Lower leg skin (tissue), 4 donors: ENCODE measurements at regions of chr1 and their contacts with region 1.

Region 1: DNA sequence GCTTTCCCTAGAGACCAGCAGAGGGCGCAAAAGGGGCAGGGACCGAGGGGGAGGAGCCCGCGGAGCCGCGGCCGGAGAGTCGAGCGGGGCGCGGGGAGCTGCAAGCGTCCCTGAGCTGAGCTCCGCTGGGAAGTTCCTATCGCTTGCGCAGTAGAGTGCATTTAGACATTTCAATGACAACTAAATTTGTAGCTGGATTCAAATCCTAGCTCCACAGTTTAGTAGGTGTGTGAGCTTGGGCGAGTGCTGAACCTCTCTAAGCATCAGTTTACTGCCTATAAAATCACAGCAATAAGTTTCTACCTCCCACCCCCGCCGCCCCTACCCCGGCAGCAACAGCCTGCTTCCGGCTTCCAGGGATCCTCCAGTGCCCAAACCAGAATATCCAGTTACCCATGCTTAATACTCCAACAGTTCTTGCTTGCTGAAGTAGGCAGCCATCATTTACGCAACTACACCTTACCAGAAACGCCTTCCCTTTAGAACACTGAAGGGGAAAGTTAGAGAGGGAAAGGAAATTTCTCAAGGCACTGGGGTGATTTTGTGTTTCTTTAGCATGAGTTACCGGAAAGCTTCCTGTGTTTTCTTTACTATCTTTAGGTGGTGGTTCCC is 9.1 kb downstream of the TLR5 start:
- DNase-seq: peak; percentile 83 to 97
- H3K4me3 ChIP-seq: no peak overlapping the region
- CTCF ChIP-seq: no peak
- POLR2A ChIP-seq: no peak

Region 2: GRCh38 chr1:223363856-223364684 is 230.1 kb after region 1 on chr1 and contains the start of gene SUSD4:
- intact Hi-C with region 1: loop called (anchors 10 kb)
- DNase-seq: no peak
- H3K4me3 ChIP-seq: peak within 1 kb of the TSS; percentile 30
- CTCF ChIP-seq: no peak
- POLR2A ChIP-seq: no peak
- total RNA-seq, gene SUSD4: 2.7 to 6.8 (median 3.8) TPM

Region 3: DNA sequence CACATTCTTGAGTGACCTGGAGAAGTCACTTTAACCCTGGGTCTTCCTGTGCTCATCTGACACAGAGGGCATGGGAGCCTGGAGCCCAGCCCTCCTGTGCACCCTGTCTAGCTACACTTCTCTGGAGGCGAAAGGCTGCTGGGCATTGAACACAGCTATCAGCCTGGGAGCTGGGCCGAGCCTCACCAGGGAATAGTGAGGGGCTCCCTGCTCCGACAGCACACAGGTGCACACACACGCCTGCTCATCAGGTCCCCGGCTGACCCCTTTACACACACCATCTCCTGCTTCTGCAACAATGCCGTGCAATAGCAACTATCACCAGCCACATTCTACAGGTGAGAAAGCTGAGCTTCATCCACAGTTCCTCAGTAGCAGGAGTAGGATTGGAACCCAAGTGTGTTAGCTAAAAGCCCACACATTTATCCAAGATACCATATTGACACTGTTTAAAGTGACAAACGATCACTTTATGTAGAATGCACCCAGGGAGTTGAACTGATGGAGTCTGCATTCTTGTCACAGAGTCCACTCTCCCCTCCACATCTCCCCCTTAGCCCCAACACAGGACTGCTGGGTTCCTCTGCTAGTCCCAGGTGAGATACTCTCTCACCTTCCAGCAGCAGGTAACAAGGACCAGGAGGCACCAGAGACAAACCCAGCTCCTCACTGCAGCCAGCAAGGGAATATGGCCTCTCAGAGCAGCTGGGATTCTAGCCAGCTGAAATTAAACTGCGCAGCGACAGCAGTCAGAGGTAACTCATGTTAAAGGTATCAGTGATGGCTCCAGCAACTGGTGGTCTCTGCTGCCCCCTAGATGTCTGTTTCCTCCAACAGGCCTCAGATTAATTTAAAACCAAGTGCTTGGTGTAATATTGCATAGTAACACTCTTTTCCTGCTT is 549.9 kb after region 1 on chr1:
- intact Hi-C with region 1: loop called (anchors 10 kb)
- DNase-seq: no peak
- H3K4me3 ChIP-seq: no peak overlapping the region
- CTCF ChIP-seq: no peak
- POLR2A ChIP-seq: no peak